PC-9 (cell line): ENCODE measurements at regions of chr1 and their contacts with region 1.

Region 1: GRCh38 chr1:182616130-182617013 is 12.2 kb upstream of the RGS16 start:
- DNase-seq: peak in 1 of 2 experiments; percentile 24
- H3K4me3 ChIP-seq: peak overlapping the region; percentile 10; the same call in 1 of the 2 replicates
- H3K27ac ChIP-seq: no peak overlapping the region; the same call in 1 of the 2 replicates
- H3K4me1 ChIP-seq: peaks cover 46% of the 10 kb centered on the region
- H3K27me3 ChIP-seq: no peaks in the 10 kb centered on the region
- CTCF ChIP-seq: no peak

Region 2: GRCh38 chr1:182586380-182586779 is 30.0 kb before region 1 on chr1:
- CTCF ChIA-PET with region 1: no interaction called
- POLR2A ChIA-PET with region 1: no interaction called
- intact Hi-C with region 1: no loop called
- DNase-seq: no peak
- H3K4me3 ChIP-seq: no peak overlapping the region
- H3K27ac ChIP-seq: no peak overlapping the region
- H3K4me1 ChIP-seq: peaks cover 12% of the 10 kb centered on the region
- H3K27me3 ChIP-seq: no peaks in the 10 kb centered on the region
- CTCF ChIP-seq: no peak

Region 3: DNA sequence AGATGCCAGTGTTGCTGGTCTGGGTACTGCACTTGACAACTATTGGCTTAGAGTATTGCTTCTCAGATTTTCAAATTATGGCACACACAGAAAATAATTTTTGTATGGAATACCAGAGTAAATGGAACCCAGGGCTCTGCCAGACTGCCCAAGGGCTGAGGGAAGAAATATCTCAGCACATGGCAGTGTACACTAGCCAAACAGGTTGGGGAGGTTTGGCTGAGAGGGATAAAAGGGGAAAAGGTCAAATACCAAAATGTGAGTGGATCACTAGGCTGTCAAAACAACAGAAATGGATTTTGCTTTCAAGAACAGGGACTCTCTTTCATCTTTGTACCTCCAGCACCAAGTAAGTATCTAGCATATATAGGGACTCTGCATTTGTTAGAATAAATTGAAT is 71.0 kb after region 1 on chr1:
- CTCF ChIA-PET with region 1: no interaction called
- POLR2A ChIA-PET with region 1: no interaction called
- intact Hi-C with region 1: loop called (anchors 1 kb)
- DNase-seq: peak; percentile 53 to 85
- H3K4me3 ChIP-seq: peak overlapping the region; percentile 37; the same call in 1 of the 2 replicates
- H3K27ac ChIP-seq: peak overlapping the region; percentile 53
- H3K4me1 ChIP-seq: peaks cover 58% of the 10 kb centered on the region
- H3K27me3 ChIP-seq: no peaks in the 10 kb centered on the region
- CTCF ChIP-seq: no peak

Region 4: GRCh38 chr1:182789138-182790076 is 173.0 kb after region 1 on chr1 and contains the start of gene NPL:
- CTCF ChIA-PET with region 1: no interaction called
- POLR2A ChIA-PET with region 1: interaction called, 34 read pairs
- intact Hi-C with region 1: no loop called
- DNase-seq: peak in 1 of 2 experiments; percentile 75
- H3K4me3 ChIP-seq: peak within 1 kb of the TSS; percentile 63
- H3K27ac ChIP-seq: no peak within 1 kb of the TSS
- H3K4me1 ChIP-seq: peaks cover 6% of the 10 kb centered on the region
- H3K27me3 ChIP-seq: peaks cover 8% of the 10 kb centered on the region; the same call in 1 of the 2 replicates
- CTCF ChIP-seq: no peak
- total RNA-seq, gene NPL: 2.3 and 3.0 TPM in 2 replicates